Right ventricle myocardium inferior (tissue), 1 donor: ENCODE measurements at regions of chr4 and their contacts with region 1.

Region 1: GRCh38 chr4:78056265-78057129 is 626 bp upstream of the FRAS1 start:
- DNase-seq: peak; percentile 75
- ATAC-seq: peak; percentile 69

Region 2: GRCh38 chr4:78100060-78100459 is 43.6 kb after region 1 on chr4:
- intact Hi-C with region 1: loop called (anchors 5 kb)
- DNase-seq: no peak
- ATAC-seq: peak; percentile 44

Region 3: DNA sequence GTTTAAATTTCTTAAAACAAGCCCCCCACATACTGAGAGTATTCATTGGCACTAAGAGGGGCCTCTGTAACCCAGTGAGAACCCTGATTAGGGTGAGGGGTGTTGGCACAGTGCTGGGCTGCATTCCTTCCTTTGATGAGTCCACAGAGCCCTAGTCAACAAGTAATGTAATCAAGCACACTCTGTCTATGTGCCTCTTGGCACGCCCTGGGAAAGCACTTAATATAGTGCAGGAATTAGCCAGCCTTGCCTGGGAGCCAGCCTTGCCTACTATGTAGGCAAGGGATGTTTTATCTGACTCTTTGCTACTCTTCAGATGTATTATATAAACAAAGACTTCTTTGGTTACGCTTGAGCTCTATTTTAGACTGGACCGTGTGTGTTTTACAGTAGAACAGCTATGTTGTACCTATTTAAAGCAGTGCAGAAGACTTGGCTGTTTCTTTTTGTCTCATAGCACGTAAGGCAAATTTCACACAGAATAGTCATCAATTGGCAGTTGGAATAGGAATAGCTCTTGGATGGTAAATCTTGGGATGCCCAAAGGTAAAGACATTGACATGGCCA is 64.9 kb after region 1 on chr4:
- intact Hi-C with region 1: loop called (anchors 5 kb)
- DNase-seq: peak; percentile 47
- ATAC-seq: peak; percentile 100

Region 4: GRCh38 chr4:78293821-78294301 is 237.4 kb after region 1 on chr4:
- intact Hi-C with region 1: loop called (anchors 10 kb)
- DNase-seq: no peak
- ATAC-seq: no peak

Region 5: DNA sequence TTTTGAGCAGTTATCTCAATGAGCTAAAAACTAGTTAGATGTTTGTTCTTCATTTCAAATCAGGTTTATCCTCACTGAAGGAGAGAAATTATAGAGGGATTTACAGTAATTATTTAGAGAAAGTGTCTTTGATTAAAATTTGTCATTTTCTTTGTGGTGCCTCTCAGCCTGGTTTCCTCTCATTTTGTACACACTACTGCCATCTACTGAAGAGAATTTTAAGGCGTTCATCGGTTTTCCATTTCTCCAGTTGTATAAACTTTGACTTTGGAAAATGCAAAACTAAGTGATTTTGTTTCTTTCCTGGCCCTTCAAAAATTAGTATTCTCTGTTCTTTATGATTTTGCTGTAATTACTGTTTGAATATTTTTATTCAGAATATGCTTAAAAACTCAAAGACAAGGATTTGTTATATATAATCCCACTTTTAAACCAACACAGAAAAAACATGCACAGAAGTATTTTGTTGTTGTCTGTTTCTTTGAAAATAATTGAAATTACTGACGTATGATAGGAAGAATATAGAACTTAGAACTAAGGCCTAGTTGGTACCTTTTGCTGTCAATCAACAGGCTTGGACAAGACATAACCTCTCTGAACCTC is 460.7 kb after region 1 on chr4:
- intact Hi-C with region 1: loop called (anchors 2 kb)
- DNase-seq: no peak
- ATAC-seq: no peak